MCF 10A (cell line): ENCODE measurements at regions of chr9 and their contacts with region 1.

Region 1: GRCh38 chr9:109422641-109423040 is 75.5 kb downstream of the PTPN3 start:
- DNase-seq: no peak
- H3K4me3 Mint-ChIP-seq: no peak overlapping the region
- H3K27ac Mint-ChIP-seq: peak overlapping the region; percentile 49
- H3K4me1 Mint-ChIP-seq: no peaks in the 10 kb centered on the region
- H3K27me3 Mint-ChIP-seq: no peaks in the 10 kb centered on the region
- CTCF ChIP-seq: no peak

Region 2: GRCh38 chr9:109411798-109412352 is 10.8 kb before region 1 on chr9:
- CTCF ChIA-PET with region 1: interaction called, 15 read pairs
- POLR2A ChIA-PET with region 1: no interaction called
- intact Hi-C with region 1: no loop called
- DNase-seq: peak; percentile 8
- H3K4me3 Mint-ChIP-seq: no peak overlapping the region
- H3K27ac Mint-ChIP-seq: no peak overlapping the region
- H3K4me1 Mint-ChIP-seq: no peaks in the 10 kb centered on the region
- H3K27me3 Mint-ChIP-seq: no peaks in the 10 kb centered on the region
- CTCF ChIP-seq: peak; percentile 44